Activated CD8-positive, alpha-beta memory T cell treated with anti-CD3 and anti-CD28 coated beads, Interleukin-2, amount 10 ng/mL, durations not matched to agents 7 days and 5 days (primary cell): ENCODE measurements at regions of chr2 and their contacts with region 1.

Region 1: DNA sequence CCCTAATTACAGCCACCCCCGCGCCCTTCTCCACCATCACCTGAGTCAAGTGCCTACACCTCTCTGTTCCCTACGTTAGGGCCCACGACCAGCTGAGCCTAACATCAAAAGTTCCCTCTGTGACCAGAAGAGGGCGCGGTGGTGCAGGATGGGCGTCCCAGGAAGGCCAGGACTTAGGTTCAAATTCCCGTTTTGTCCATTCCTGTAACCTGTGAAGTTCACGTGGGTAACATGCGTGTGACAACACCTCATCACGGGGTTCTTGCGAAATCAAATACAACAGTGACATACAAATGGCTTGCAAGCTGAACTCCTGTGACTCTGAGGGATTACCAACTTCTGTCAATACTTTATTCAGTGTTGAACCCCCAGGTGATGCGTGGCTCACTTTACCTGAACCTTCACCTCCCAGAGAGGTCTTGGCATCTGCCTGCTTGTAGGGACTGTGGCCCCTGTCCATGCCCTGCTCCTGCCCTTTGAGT is 207.9 kb downstream of the ARL4C start:
- DNase-seq: peak; percentile 83
- ATAC-seq: no peak
- H3K4me3 Mint-ChIP-seq: peak overlapping the region; percentile 64
- H3K27ac Mint-ChIP-seq: peak overlapping the region; percentile 99
- H3K4me1 Mint-ChIP-seq: peaks cover 79% of the 10 kb centered on the region
- H3K27me3 Mint-ChIP-seq: no peaks in the 10 kb centered on the region

Region 2: GRCh38 chr2:234269769-234270204 is 19.2 kb before region 1 on chr2:
- CTCF ChIA-PET with region 1: interaction called, 10 read pairs
- DNase-seq: no peak
- ATAC-seq: no peak
- H3K4me3 Mint-ChIP-seq: no peak overlapping the region
- H3K27ac Mint-ChIP-seq: peak overlapping the region; percentile 13
- H3K4me1 Mint-ChIP-seq: peaks cover 53% of the 10 kb centered on the region
- H3K27me3 Mint-ChIP-seq: no peaks in the 10 kb centered on the region

Region 3: DNA sequence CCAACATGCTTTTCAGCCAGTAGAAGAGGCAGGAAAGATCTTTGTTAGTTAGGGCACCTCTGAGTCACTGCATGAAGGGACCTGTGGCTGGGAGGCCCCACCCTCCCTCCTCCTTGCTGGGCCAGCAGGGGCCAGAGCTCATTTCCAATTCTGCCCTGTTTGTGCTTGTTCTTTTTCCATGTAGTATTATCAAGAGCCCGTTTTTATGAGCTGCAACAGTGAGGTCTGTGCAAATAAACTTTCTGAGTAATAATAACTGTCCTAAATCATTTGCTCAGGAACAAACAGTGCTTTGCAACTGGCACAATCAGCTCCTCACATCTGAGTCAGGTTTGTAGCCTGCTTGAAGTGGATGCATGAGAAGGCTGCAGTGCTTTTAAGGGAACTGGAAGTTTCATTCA is 79.8 kb after region 1 on chr2:
- CTCF ChIA-PET with region 1: interaction called, 12 read pairs
- DNase-seq: peak; percentile 77
- ATAC-seq: peak; percentile 94
- H3K4me3 Mint-ChIP-seq: peak overlapping the region; percentile 36
- H3K27ac Mint-ChIP-seq: peak overlapping the region; percentile 85
- H3K4me1 Mint-ChIP-seq: peaks cover 74% of the 10 kb centered on the region
- H3K27me3 Mint-ChIP-seq: no peaks in the 10 kb centered on the region

Region 4: DNA sequence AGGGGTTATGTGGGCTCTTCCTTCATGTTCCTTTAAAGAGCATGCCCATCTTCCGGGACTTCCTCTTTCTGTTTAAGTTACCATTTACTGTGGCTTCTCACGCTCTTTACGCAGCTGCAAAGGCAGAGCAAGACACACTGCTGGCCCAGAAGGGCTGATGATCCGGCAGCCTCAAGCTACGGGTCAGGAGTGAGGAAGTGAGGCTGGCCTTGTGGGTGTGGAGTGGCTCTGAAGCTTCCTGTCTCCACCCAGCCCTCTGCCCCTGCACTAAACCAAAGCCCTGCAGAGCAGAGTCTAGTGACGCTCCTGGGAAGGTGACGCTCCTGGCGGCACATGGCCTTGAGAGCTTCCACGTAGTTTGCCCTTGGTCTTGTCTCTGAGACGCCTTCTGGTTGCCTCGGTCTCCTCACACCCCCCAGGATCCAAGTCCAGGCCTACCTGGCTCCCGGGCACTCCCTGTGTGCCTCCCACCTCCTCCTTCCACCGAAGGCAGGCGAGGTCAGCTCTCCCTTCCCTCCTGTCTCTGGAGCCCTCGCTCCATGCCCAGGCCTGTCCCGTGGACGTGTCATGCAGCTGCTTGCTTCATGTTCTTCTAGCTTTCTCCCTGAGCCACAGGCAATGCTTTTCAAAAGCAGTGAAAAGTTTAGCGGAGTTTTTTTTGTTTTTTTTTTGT is 157.5 kb after region 1 on chr2:
- CTCF ChIA-PET with region 1: interaction called, 40 read pairs
- DNase-seq: peak; percentile 96
- ATAC-seq: peak; percentile 95
- H3K4me3 Mint-ChIP-seq: peak overlapping the region; percentile 44
- H3K27ac Mint-ChIP-seq: peak overlapping the region; percentile 97
- H3K4me1 Mint-ChIP-seq: peaks cover 84% of the 10 kb centered on the region
- H3K27me3 Mint-ChIP-seq: no peaks in the 10 kb centered on the region

Region 5: GRCh38 chr2:234483568-234484251 is 194.7 kb after region 1 on chr2:
- CTCF ChIA-PET with region 1: interaction called, 20 read pairs
- DNase-seq: peak; percentile 96
- ATAC-seq: peak; percentile 84
- H3K4me3 Mint-ChIP-seq: peak overlapping the region; percentile 35
- H3K27ac Mint-ChIP-seq: peak overlapping the region; percentile 86
- H3K4me1 Mint-ChIP-seq: peaks cover 96% of the 10 kb centered on the region
- H3K27me3 Mint-ChIP-seq: no peaks in the 10 kb centered on the region